Activated CD4-positive, alpha-beta T cell treated with anti-CD3 and anti-CD28 coated beads for 36 hours (primary cell): ENCODE measurements at regions of chr14 and their contacts with region 1.

Region 1: DNA sequence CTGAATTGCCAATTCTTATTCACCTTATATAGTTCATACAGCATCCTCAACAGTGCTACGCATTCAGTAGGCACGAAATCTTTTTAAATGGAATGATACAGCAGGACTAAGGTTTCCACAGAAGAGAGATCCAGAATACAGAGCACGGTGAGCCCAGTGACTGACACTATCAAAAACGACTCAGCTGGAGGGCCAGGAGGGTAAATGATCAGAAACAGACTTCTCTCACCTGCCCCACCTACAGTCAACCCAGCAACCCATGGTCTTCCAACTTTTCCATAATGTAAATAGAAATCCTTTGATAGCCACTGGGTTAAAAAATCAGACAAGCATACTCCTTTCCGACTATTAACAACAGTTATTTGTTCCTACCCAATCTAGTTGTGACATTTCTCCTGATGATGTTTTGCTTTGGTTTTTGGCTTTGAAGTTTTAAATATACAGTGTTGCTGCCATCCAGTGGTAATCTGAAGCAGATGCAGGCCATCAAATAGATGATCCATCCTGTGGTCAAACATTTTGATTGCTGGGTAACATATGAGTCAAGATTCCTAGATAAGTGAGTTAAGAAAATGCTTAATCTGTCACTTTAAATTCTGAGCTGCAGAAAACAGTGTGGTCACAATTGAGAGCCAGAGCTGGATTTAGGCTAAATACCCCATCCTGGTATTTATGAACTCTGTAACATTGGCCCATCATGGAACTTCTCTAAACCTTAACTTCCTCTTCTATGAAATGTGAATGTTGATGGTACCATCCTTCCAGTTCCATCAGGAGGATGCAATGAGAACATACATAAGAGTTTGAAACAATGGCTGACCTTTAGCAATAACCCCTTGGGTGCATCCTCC is 42.0 kb downstream of the GPHB5 start:
- DNase-seq: no peak
- ATAC-seq: peak; percentile 77
- H3K4me3 Mint-ChIP-seq: no peak overlapping the region
- H3K27ac Mint-ChIP-seq: no peak overlapping the region
- H3K4me1 Mint-ChIP-seq: no peaks in the 10 kb centered on the region
- H3K27me3 Mint-ChIP-seq: peaks cover 6% of the 10 kb centered on the region

Region 2: GRCh38 chr14:61894452-61895077 is 1382.2 kb before region 1 on chr14:
- CTCF ChIA-PET with region 1: no interaction called
- POLR2A ChIA-PET with region 1: no interaction called
- intact Hi-C with region 1: loop called in 1 of 2 experiments (anchors 10 kb)
- DNase-seq: peak; percentile 83
- ATAC-seq: no peak
- H3K4me3 Mint-ChIP-seq: no peak overlapping the region
- H3K27ac Mint-ChIP-seq: no peak overlapping the region
- H3K4me1 Mint-ChIP-seq: peaks cover 14% of the 10 kb centered on the region
- H3K27me3 Mint-ChIP-seq: peaks cover 2% of the 10 kb centered on the region

Region 3: DNA sequence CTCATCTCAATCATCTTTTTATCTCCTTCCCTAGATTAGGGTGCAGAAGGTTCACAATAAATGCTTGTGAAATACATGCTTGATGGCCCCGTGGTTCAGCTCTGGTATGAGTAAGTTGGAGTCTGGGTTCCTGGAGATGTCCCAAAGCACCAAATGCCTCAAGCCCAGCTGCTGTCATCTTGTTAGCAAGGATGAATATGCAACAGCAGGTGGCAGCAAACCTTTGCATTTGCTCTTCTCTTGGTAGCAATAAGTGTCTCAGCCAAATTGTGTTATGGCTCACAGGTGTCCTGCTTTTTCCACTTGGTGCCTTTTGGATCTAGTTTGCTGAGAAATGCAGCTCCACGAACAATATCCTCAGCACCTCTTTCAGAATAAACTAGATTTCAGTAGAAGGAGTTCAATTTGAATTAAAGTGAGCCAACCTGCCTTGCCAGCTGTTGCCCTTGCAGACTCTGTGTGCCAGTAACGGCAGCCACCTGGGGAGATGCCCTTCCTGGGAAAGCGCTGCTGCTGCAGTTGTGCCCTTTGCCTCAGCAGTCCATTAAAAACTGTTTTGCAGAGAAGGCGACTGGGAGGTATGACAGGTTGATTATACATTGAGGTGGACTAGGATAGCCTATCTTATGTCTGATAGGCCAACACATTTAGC is 1097.2 kb before region 1 on chr14:
- CTCF ChIA-PET with region 1: interaction called, 7 read pairs
- POLR2A ChIA-PET with region 1: no interaction called
- intact Hi-C with region 1: loop called (anchors 1 to 2 kb)
- DNase-seq: peak; percentile 63
- ATAC-seq: no peak
- H3K4me3 Mint-ChIP-seq: no peak overlapping the region
- H3K27ac Mint-ChIP-seq: no peak overlapping the region
- H3K4me1 Mint-ChIP-seq: no peaks in the 10 kb centered on the region
- H3K27me3 Mint-ChIP-seq: peaks cover 19% of the 10 kb centered on the region

Region 4: DNA sequence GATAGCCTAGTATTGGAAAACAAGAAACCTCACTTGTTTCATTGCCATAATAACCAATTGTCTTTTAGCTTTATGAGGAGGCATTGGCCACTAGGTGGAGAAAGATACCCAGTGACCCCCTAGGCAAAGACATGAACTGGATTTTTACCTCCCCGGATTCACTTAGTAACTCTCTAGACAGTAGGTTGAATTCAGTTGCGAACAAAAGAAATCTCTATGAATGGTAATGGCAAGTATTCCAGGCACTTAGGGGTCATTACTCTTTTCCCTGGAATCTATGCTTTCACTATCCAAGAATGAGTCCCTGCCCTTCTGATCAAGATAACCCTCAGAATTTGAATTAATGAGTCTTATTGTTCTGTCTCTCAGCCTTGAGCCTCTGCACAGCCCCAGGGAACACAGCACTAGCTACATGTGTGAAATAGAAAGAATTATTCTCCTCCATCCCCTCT is 101.9 kb before region 1 on chr14:
- CTCF ChIA-PET with region 1: interaction called, 7 read pairs
- POLR2A ChIA-PET with region 1: no interaction called
- intact Hi-C with region 1: loop called in 1 of 2 experiments (anchors 2 kb)
- DNase-seq: no peak
- ATAC-seq: no peak
- H3K4me3 Mint-ChIP-seq: no peak overlapping the region
- H3K27ac Mint-ChIP-seq: no peak overlapping the region
- H3K4me1 Mint-ChIP-seq: no peaks in the 10 kb centered on the region
- H3K27me3 Mint-ChIP-seq: peaks cover 4% of the 10 kb centered on the region